Panc1 (cell line): ENCODE measurements at regions of chr17 and their contacts with region 1.

Region 1: DNA sequence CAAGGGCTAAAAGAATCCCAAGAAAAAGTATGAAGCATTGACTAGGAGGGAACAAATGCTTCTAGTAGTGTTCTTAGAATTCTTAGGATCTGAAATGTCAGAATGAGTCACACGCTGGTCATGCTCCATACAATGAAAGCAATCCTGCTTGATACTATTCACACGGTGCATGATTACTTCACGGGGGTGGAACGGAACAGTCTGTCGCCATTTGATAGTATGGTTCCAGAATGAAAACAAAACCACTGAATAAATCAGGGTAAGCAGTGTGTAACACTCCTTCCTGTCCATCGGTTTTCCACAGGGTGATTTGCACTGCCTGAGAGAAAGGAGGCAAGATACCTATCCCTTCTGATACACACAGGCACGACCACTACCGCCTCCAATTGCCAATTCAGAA is 22.9 kb upstream of the YWHAE start:
- DNase-seq: peak; percentile 81
- ATAC-seq: peak; percentile 84
- H3K4me3 ChIP-seq: no peak overlapping the region
- H3K27ac ChIP-seq: no peak overlapping the region
- H3K4me1 ChIP-seq: no peaks in the 10 kb centered on the region
- H3K27me3 ChIP-seq: no peaks in the 10 kb centered on the region
- CTCF ChIP-seq: no peak

Region 2: DNA sequence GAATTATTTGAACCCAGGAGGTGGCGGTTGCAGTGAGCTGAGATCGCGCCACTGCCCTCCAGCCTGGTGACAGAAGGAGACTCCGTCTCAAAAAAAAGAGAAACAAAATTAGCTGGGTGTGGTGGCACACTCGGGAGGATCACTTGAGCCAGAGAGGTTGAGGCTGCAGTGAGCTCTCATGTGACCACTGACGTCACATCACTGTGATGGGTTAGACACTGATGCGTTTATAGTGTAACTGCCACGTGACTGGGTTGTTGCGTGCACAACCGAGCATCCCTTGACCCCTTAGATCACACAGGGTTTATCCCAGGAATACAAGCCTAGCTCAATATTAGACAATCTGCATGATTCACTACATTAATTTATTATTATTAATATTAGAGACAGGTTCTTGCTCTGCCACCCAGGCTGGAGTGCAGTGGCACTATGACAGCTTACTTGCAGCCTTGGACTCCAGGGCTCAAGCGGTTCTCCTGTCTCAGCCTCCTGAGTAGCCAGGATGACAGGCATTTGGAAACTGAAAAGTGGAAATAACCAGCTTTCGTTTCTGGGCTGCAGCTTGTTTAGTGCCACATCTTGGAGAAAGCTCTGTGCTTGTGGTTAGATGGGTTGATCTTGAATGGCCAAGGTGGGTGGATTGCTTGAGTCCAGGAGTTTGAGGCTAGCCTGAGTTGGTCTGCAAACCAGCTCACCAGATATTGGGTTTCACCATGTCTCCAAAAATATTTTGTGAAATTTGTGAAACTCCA is 216.7 kb before region 1 on chr17:
- CTCF ChIA-PET with region 1: no interaction called
- POLR2A ChIA-PET with region 1: no interaction called
- in situ Hi-C with region 1: no loop called
- intact Hi-C with region 1: no loop called
- DNase-seq: no peak
- ATAC-seq: no peak
- H3K4me3 ChIP-seq: no peak overlapping the region
- H3K27ac ChIP-seq: no peak overlapping the region
- H3K4me1 ChIP-seq: no peaks in the 10 kb centered on the region
- H3K27me3 ChIP-seq: no peaks in the 10 kb centered on the region
- CTCF ChIP-seq: no peak

Region 3: DNA sequence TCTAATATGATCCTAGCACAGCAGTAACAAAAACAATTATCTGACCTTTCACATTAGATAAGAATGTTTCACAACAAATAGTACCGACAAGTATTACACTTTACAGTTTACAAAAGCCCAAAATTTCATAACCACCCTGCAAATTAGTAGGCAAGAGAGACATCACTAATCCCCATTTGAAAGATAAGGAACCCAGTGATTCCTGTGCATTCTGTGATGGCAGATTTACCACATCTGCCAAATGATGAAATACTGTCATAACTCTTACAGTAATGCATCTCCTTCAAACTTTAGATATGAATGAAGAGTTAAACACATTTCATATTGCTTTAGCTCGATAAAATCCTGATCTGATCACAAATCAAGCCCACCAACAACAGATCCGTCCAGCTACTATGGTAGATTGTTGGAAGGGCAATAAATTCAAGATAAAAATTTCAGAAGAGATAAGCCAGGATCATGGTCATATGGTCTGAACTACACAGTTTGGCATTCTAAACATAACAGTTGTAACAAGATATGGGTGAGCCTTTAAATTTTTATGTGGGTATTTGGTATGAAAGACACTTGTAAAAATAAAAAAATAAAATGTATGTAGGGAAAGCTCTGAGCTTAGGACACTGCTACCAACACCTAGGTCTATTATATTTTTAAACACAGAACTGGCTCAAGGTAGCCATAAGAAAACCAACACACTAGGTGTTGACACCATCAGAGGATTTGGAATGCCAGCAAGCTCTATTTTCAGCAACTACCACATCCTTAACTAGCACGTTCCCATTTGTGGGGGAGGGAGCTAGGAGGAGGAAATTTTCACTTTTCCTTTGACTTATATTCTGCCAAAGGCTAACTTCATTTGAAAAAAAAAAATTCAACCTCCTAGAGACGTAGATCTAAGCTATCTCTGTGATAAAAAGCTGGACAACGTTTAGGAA is 32.2 kb before region 1 on chr17:
- CTCF ChIA-PET with region 1: no interaction called
- POLR2A ChIA-PET with region 1: no interaction called
- in situ Hi-C with region 1: no loop called
- intact Hi-C with region 1: no loop called
- DNase-seq: no peak
- ATAC-seq: no peak
- H3K4me3 ChIP-seq: no peak overlapping the region
- H3K27ac ChIP-seq: peak overlapping the region; percentile 7; the same call in 1 of the 2 replicates
- H3K4me1 ChIP-seq: peaks cover 52% of the 10 kb centered on the region
- H3K27me3 ChIP-seq: no peaks in the 10 kb centered on the region
- CTCF ChIP-seq: no peak

Region 4: GRCh38 chr17:1686086-1686485 is 263.2 kb after region 1 on chr17:
- CTCF ChIA-PET with region 1: no interaction called
- POLR2A ChIA-PET with region 1: interaction called, 11 read pairs
- in situ Hi-C with region 1: no loop called
- intact Hi-C with region 1: no loop called
- DNase-seq: no peak
- ATAC-seq: no peak
- H3K4me3 ChIP-seq: no peak overlapping the region
- H3K27ac ChIP-seq: no peak overlapping the region
- H3K4me1 ChIP-seq: 0 out of 2 replicates have a peak, but pooled peaks cover 2% of the 10 kb centered on the region
- H3K27me3 ChIP-seq: no peaks in the 10 kb centered on the region
- CTCF ChIP-seq: no peak